Aorta (tissue), 5 donors: ENCODE measurements at regions of chr5 and their contacts with region 1.

Region 1: GRCh38 chr5:55601204-55601618 is 66.4 kb upstream of the PLPP1 start:
- DNase-seq: peak; percentile 86 to 89
- ATAC-seq: peak; percentile 87
- H3K4me3 ChIP-seq: no peak overlapping the region
- H3K27ac ChIP-seq: peak overlapping the region; percentile 95 to 99
- H3K4me1 ChIP-seq: peaks cover 0 to 17% of the 10 kb centered on the region in 2 donors
- H3K27me3 ChIP-seq: no peaks in the 10 kb centered on the region

Region 2: GRCh38 chr5:55564721-55565120 is 36.5 kb before region 1 on chr5:
- intact Hi-C with region 1: loop called (anchors 1 to 5 kb)
- DNase-seq: no peak
- ATAC-seq: no peak
- H3K4me3 ChIP-seq: no peak overlapping the region
- H3K27ac ChIP-seq: no peak overlapping the region
- H3K4me1 ChIP-seq: no peaks in the 10 kb centered on the region
- H3K27me3 ChIP-seq: no peaks in the 10 kb centered on the region

Region 3: GRCh38 chr5:55668356-55668755 is 67.1 kb after region 1 on chr5:
- intact Hi-C with region 1: loop called (anchors 5 to 10 kb)
- DNase-seq: no peak
- ATAC-seq: no peak
- H3K4me3 ChIP-seq: no peak overlapping the region
- H3K27ac ChIP-seq: no peak overlapping the region
- H3K4me1 ChIP-seq: peaks cover 0 to 3% of the 10 kb centered on the region in 2 donors
- H3K27me3 ChIP-seq: no peaks in the 10 kb centered on the region